Dorsolateral prefrontal cortex (tissue), 120 donors: ENCODE measurements at regions of chr18 and their contacts with region 1.

Region 1: DNA sequence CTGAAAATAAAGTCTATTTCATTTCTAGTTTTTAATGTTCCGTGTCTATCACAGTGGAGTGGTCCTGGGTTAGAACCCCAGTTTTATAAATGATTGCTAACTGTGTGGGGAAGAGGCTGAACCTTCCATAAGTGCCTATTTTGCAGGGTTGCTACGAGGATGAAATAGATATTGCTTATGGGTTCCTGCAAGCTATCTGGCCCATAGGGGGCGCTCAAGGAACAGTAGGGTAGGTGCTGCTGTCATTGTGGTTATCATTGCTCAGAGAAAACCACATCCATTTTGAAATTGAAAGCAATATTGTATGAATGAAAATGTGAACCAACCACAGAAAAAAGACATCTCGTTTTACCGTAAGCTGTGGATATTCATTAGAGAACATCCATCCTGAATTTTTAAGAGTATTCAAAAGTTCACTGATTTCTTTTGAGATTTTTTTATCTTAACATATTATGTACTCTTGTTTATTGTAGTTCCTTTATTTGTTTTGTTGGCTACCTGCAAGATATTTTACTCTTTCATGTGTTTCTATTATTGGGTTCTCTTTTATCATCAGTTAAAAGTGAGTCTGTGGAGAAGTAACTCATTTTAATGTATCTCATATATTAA is 261.6 kb downstream of the NAPG start:
- DNase-seq: peak; percentile 8 to 85 (median 67)
- H3K4me3 ChIP-seq: no peak overlapping the region
- H3K27ac ChIP-seq: peak overlapping the region in 20 of 59 donors; percentile 1 to 95 (median 36)
- H3K27me3 ChIP-seq: peaks cover 0 to 5% (median 0%) of the 10 kb centered on the region in 45 donors
- CTCF ChIP-seq: peak; percentile 48 to 89 (median 72)

Region 2: DNA sequence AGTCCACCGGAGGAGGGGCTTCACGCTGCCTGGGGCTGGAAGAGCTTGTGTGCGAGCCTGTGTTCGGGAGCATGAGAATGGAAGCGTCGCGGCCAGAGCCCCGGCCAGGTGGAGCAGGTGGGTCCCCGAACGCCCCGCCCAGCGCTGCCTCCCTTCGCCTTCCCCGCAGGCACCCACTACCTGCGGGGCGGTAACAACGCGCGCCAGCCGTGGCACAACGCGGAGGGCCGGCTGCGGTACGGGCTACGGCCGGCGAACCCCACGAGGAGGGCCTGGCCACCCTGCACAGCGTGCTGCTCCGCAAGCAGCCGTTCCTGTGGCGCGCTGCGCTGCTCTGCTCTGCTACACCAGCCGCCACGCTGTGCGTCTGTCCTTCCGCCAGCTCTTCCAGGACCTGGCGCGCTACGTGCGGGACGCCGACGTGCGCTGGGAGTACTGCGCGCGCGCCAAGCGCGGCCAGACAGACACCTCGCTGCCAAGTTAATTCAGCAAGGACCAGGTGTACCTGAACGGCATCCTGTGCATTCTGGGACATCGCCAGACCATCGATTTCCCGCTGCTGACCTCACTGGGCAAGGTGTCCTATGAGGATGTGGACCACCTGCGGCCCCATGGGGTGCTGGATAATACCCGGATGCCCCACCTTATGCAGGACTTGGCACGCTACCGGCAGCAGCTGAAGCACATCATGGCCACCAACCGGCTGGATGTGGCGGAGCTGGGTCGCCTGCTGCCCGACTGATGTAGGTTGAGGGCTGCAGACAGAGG is 61.0 kb before region 1 on chr18:
- intact Hi-C with region 1: loop called in 1 of 2 experiments (anchors 5 kb)
- DNase-seq: peak in 4 of 10 donors; percentile 7 to 61 (median 41)
- H3K4me3 ChIP-seq: peak overlapping the region in 54 of 59 donors; percentile 0 to 62 (median 44)
- H3K27ac ChIP-seq: peak overlapping the region in 14 of 59 donors; percentile 6 to 71 (median 42)
- H3K27me3 ChIP-seq: peaks cover 0 to 9% (median 0%) of the 10 kb centered on the region in 45 donors
- CTCF ChIP-seq: no peak

Region 3: GRCh38 chr18:11040823-11041656 is 253.6 kb after region 1 on chr18:
- intact Hi-C with region 1: loop called in 1 of 2 experiments (anchors 5 kb)
- DNase-seq: peak in 4 of 10 donors; percentile 12 to 64 (median 47)
- H3K4me3 ChIP-seq: peak overlapping the region in 51 of 59 donors; percentile 1 to 61 (median 34)
- H3K27ac ChIP-seq: peak overlapping the region in 56 of 59 donors; percentile 11 to 92 (median 76)
- H3K27me3 ChIP-seq: no peaks in the 10 kb centered on the region
- CTCF ChIP-seq: peak; percentile 49 to 92 (median 80)

Region 4: GRCh38 chr18:11149441-11150270 is 362.3 kb after region 1 on chr18 and contains the start of gene PIEZO2:
- intact Hi-C with region 1: loop called (anchors 5 kb)
- DNase-seq: peak in 9 of 10 donors; percentile 49 to 90 (median 76)
- H3K4me3 ChIP-seq: peak within 1 kb of the TSS; percentile 39 to 82 (median 64)
- H3K27ac ChIP-seq: peak within 1 kb of the TSS in 53 of 59 donors; percentile 31 to 94 (median 83)
- H3K27me3 ChIP-seq: peaks cover 0 to 79% (median 47%) of the 10 kb centered on the region in 45 donors
- CTCF ChIP-seq: peak in 26 of 56 donors; percentile 7 to 50 (median 25)
- total RNA-seq, gene PIEZO2: 3.3 to 115 (median 29.1) TPM